Motor neuron (in vitro differentiated cells): ENCODE measurements at regions of chr10 and their contacts with region 1.

Region 1: GRCh38 chr10:28381903-28382347 is 79.1 kb upstream of the MPP7 start:
- ATAC-seq: peak; percentile 80 to 99 (median 88)
- H3K4me3 ChIP-seq: no peak overlapping the region
- H3K27ac ChIP-seq: no peak overlapping the region
- H3K4me1 ChIP-seq: no peaks in the 10 kb centered on the region

Region 2: DNA sequence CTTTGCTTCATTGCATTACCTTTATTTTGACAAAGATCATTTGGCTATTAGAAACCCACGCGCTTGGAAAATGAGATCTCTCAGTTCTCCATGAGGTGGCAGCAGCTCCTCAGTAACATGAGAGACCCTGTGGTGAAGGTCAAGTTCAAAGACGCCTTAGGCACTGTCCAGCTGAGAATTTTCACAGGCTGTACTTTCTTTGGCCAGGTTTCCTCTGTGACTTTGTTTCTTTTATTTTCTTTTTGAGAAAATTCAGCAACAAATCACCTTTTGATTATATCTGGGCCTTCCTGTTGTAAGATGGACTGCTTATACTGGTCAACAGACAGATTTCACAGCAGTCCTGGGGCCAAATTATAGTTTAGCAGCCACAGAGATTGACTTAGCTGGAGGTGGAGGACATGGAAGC is 823.3 kb before region 1 on chr10:
- in situ Hi-C with region 1: loop called in 1 of 9 experiments (anchors 25 kb)
- ATAC-seq: peak; percentile 37 to 73 (median 52)
- H3K4me3 ChIP-seq: no peak overlapping the region
- H3K27ac ChIP-seq: no peak overlapping the region
- H3K4me1 ChIP-seq: no peaks in the 10 kb centered on the region

Region 3: DNA sequence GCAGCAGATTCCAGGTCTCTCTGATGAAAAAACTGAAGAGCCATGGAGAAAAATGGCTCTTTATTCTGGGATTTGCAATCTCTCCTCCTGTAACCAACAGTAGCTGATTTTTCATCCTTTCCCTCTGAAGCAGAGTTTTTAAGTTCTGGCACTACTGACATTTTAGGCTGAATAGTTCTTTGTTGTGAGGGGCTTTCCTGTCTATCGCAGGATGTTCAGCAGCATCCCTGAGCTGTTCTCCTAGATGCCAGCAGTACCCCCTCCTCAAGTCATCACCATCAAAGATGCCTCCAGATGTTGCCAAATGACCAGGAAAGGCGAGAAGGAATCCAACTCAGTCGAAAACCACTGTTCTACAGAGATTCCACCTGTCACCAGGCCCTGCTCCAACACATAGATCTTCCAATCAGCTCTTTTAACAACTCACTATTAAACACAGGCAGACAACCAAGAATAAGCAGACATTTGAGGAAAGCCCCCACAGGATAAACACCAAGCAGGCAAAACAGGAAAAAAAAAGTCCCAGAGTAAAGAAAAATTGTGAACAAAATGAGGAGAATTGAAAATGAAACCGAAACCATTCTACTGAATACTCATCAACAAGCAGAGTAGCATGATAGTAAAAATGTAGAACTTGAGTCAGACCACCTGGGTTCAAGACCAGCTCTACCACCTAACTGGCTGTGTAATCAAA is 203.8 kb before region 1 on chr10:
- in situ Hi-C with region 1: no loop called
- ATAC-seq: peak in 2 of 8 experiments; percentile 28 to 35
- H3K4me3 ChIP-seq: no peak overlapping the region
- H3K27ac ChIP-seq: no peak overlapping the region
- H3K4me1 ChIP-seq: no peaks in the 10 kb centered on the region

Region 4: GRCh38 chr10:28241741-28242399 is 140.1 kb before region 1 on chr10:
- in situ Hi-C with region 1: loop called in 1 of 9 experiments (anchors 25 kb)
- ATAC-seq: peak; percentile 76 to 92 (median 86)
- H3K4me3 ChIP-seq: no peak overlapping the region
- H3K27ac ChIP-seq: no peak overlapping the region
- H3K4me1 ChIP-seq: peaks cover 0 to 4% of the 10 kb centered on the region in 2 donors

Region 5: GRCh38 chr10:28250782-28251181 is 131.1 kb before region 1 on chr10:
- in situ Hi-C with region 1: loop called in 4 of 9 experiments (anchors 10 to 25 kb)
- ATAC-seq: peak in 3 of 8 experiments; percentile 28 to 35 (median 33)
- H3K4me3 ChIP-seq: no peak overlapping the region
- H3K27ac ChIP-seq: no peak overlapping the region
- H3K4me1 ChIP-seq: peaks cover 0 to 7% of the 10 kb centered on the region in 2 donors

Region 6: GRCh38 chr10:28263136-28263820 is 118.6 kb before region 1 on chr10:
- in situ Hi-C with region 1: loop called in 4 of 9 experiments (anchors 10 to 25 kb)
- ATAC-seq: peak in 1 of 8 experiments; percentile 35
- H3K4me3 ChIP-seq: no peak overlapping the region
- H3K27ac ChIP-seq: no peak overlapping the region
- H3K4me1 ChIP-seq: no peaks in the 10 kb centered on the region